Naive thymus-derived CD4-positive, alpha-beta T cell (primary cell): ENCODE measurements at regions of chr1 and their contacts with region 1.

Region 1: DNA sequence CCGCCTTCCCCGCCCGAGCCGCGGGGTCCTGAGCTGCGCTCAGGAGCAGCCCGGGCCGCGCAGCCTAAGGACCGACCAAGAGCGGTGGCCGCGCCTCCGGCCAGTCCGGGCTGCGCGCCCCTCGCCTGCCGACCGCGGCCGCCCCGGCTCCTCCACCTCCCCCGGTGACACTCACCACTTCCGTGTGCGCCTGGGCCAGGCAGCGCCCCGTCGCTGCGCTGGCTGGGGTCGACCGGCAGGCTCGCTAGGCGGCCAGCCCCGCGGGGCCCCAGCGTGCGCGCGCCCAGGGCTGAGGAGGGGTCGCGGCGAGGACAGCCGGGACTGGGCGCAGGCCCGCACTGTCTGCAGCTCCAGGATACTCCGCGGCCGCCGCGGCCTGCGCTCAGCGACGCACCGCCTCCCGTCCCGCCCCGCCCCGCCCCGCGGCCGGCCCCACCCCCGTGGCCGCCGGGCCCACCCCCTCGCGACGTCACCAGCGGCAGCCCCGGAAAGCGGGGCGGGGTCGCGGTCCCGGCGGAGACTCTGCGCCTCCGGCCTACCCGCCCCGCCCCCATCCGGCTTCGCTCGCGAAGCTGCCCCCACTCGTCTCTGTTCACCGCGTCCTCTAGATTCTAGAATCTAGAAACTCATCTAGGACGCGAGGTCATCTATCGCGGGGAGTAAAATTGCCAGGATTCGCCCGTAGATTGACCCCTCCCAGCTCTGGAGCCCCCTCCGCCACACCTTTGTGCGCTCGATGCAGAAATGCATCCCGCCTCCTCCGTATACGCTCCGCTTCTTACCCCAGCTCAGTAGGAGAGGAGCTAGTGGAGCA is at the start of gene JAK1:
- DNase-seq: peak; percentile 79 to 94 (median 91)
- ATAC-seq: peak; percentile 91
- H3K4me3 ChIP-seq: peak within 1 kb of the TSS; percentile 93
- H3K4me3 Mint-ChIP-seq: peak within 1 kb of the TSS; percentile 90 to 97 (median 94)
- H3K27ac ChIP-seq: peak within 1 kb of the TSS; percentile 97
- H3K27ac Mint-ChIP-seq: peak within 1 kb of the TSS; percentile 91 to 99 (median 97)
- H3K4me1 ChIP-seq: peaks cover 31 to 41% of the 10 kb centered on the region in 2 donors
- H3K4me1 Mint-ChIP-seq: peaks cover 37 to 55% (median 49%) of the 10 kb centered on the region in 7 donors
- H3K27me3 ChIP-seq: no peaks in the 10 kb centered on the region
- H3K27me3 Mint-ChIP-seq: peaks cover 0 to 3% (median 0%) of the 10 kb centered on the region in 5 donors
- total RNA-seq, gene JAK1: 210 to 365 (median 265) TPM

Region 2: DNA sequence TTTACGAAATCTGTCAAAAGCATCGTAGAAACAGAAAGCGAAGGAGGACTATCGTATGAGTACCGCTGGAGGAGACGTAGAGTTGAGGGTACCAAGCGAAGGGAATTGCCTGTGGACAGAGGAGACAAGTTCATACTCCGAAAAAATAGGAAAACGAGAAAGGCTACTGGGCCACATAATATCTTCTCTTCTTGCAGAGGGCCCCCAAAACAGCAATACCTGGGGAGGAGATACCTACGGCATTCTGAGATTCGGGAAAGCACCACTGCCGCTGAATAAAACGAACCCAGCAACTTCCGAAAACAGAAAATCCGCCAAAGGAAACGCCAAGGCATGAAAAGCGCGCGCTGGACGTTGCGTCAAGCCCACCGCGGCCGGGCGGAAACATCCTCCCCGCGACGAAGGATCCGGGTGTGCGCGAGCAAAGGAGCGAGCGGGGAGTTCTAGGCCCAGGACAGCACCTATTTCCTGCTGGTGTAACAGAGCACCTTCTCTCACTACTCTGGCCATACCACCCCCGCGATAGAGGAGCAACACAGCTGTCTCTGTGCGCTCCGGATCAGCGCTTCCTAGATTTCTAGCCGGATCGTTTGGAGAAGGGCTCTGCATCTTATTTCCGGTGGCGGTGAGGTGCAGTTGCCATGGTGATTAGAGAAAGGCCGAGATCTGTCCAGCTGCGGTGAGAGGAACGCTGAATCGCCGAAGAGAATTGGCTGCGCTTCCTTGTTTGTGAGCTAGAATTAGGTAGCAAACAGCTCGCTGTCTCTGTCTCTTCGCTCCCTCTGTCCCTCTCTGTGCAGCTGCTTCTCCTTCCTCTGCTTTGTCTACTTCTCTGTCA is 1443.3 kb before region 1 on chr1 and contains the starts of genes EFCAB7 and ITGB3BP:
- CTCF ChIA-PET with region 1: no interaction called
- POLR2A ChIA-PET with region 1: no interaction called
- intact Hi-C with region 1: loop called in 1 of 2 experiments (anchors 10 kb)
- DNase-seq: peak; percentile 73 to 86 (median 82)
- ATAC-seq: peak; percentile 92
- H3K4me3 ChIP-seq: peak within 1 kb of the TSS; percentile 83
- H3K4me3 Mint-ChIP-seq: peak within 1 kb of the TSS; percentile 82 to 100 (median 98)
- H3K27ac ChIP-seq: peak within 1 kb of the TSS; percentile 78
- H3K27ac Mint-ChIP-seq: peak within 1 kb of the TSS; percentile 93 to 99 (median 97)
- H3K4me1 ChIP-seq: peaks cover 7 to 13% of the 10 kb centered on the region in 2 donors
- H3K4me1 Mint-ChIP-seq: peaks cover 12 to 47% (median 36%) of the 10 kb centered on the region in 7 donors
- H3K27me3 ChIP-seq: no peaks in the 10 kb centered on the region
- H3K27me3 Mint-ChIP-seq: peaks cover 0 to 2% (median 0%) of the 10 kb centered on the region in 5 donors
- total RNA-seq, gene EFCAB7: 4.1 to 13.5 (median 9.2) TPM
- total RNA-seq, gene ITGB3BP: 16.5 to 52.6 (median 32.9) TPM

Region 3: GRCh38 chr1:64711266-64711665 is 255.1 kb before region 1 on chr1:
- CTCF ChIA-PET with region 1: no interaction called
- POLR2A ChIA-PET with region 1: no interaction called
- intact Hi-C with region 1: no loop called
- DNase-seq: no peak
- ATAC-seq: no peak
- H3K4me3 ChIP-seq: no peak overlapping the region
- H3K4me3 Mint-ChIP-seq: no peak overlapping the region
- H3K27ac ChIP-seq: no peak overlapping the region
- H3K27ac Mint-ChIP-seq: no peak overlapping the region
- H3K4me1 ChIP-seq: no peaks in the 10 kb centered on the region
- H3K4me1 Mint-ChIP-seq: peaks cover 0 to 2% (median 0%) of the 10 kb centered on the region in 7 donors
- H3K27me3 ChIP-seq: no peaks in the 10 kb centered on the region
- H3K27me3 Mint-ChIP-seq: peaks cover 0 to 16% (median 0%) of the 10 kb centered on the region in 5 donors

Region 4: DNA sequence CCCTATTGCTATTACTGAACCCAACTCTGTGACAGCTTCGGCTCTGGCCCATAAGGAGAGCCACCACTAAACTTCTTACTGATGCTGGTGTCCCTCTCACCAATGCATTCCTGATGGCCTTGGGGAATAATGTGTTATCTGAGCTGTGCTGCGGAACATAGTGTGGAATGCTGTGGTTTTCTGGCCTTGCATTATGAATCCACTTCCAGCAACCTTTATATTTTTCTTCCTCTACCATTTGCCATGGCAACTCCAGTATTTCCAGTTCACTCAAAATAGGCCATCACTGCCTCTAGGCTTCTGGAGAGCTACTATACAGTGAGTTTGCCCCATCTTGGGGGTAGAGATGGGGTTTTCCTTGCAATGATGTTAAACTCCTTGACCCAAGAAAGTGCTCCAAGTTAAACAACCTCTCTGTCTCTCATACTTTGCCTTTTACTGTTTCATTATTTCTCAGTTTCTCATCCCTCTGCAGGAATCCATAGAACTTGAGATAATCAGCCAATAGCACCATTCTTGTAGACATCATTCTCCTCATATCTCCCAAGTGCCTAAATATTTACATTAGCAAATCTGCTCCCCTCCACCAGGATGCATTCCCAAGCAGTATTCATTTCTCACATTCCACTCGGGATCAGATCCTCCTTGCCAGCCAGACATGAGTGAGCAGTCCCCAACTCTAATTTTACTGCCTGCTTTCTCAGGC is 232.6 kb before region 1 on chr1:
- CTCF ChIA-PET with region 1: no interaction called
- POLR2A ChIA-PET with region 1: no interaction called
- intact Hi-C with region 1: no loop called
- DNase-seq: no peak
- ATAC-seq: no peak
- H3K4me3 ChIP-seq: no peak overlapping the region
- H3K4me3 Mint-ChIP-seq: no peak overlapping the region
- H3K27ac ChIP-seq: no peak overlapping the region
- H3K27ac Mint-ChIP-seq: no peak overlapping the region
- H3K4me1 ChIP-seq: no peaks in the 10 kb centered on the region
- H3K4me1 Mint-ChIP-seq: no peaks in the 10 kb centered on the region
- H3K27me3 ChIP-seq: no peaks in the 10 kb centered on the region
- H3K27me3 Mint-ChIP-seq: peaks cover 0 to 15% (median 4%) of the 10 kb centered on the region in 5 donors

Region 5: GRCh38 chr1:64744492-64745180 is 221.7 kb before region 1 on chr1 and contains the start of gene RAVER2:
- CTCF ChIA-PET with region 1: no interaction called
- POLR2A ChIA-PET with region 1: no interaction called
- intact Hi-C with region 1: loop called (anchors 5 to 10 kb)
- DNase-seq: peak; percentile 41 to 60 (median 48)
- ATAC-seq: peak; percentile 84
- H3K4me3 ChIP-seq: peak within 1 kb of the TSS; percentile 55
- H3K4me3 Mint-ChIP-seq: peak within 1 kb of the TSS; percentile 80 to 98 (median 90)
- H3K27ac ChIP-seq: peak within 1 kb of the TSS; percentile 10
- H3K27ac Mint-ChIP-seq: peak within 1 kb of the TSS in 8 of 9 donors; percentile 28 to 93 (median 82)
- H3K4me1 ChIP-seq: peaks cover 5% of the 10 kb centered on the region in 2 donors
- H3K4me1 Mint-ChIP-seq: peaks cover 11 to 26% (median 16%) of the 10 kb centered on the region in 7 donors
- H3K27me3 ChIP-seq: no peaks in the 10 kb centered on the region
- H3K27me3 Mint-ChIP-seq: peaks cover 0 to 51% (median 6%) of the 10 kb centered on the region in 5 donors
- total RNA-seq, gene RAVER2: 0.29 to 1.9 (median 1.2) TPM

Region 6: DNA sequence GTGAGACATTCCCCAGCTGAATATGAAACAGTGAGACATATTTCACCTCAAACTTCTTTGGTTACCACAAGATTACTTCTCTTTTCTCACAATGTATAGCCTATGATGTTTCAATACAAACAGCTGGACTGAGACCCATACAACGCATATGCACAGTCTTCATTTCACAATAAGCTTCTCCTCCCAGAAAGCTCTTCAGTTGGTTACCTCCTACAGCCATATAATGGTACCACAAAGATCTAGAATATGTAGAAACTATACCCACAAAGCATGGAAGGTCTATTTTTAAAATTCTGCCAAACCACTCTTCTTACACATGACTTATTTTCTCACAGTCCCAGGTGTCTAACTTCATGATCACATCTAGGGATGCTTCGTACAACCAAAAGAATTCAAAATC is 70.9 kb before region 1 on chr1:
- CTCF ChIA-PET with region 1: no interaction called
- POLR2A ChIA-PET with region 1: interaction called, 8 read pairs
- intact Hi-C with region 1: loop called in 1 of 2 experiments (anchors 5 kb)
- DNase-seq: no peak
- ATAC-seq: peak; percentile 54
- H3K4me3 ChIP-seq: no peak overlapping the region
- H3K4me3 Mint-ChIP-seq: peak overlapping the region in 8 of 10 donors; percentile 7 to 62 (median 36)
- H3K27ac ChIP-seq: no peak overlapping the region
- H3K27ac Mint-ChIP-seq: peak overlapping the region in 5 of 9 donors; percentile 1 to 48 (median 43)
- H3K4me1 ChIP-seq: peaks cover 70 to 79% of the 10 kb centered on the region in 2 donors
- H3K4me1 Mint-ChIP-seq: peaks cover 68 to 100% (median 97%) of the 10 kb centered on the region in 7 donors
- H3K27me3 ChIP-seq: no peaks in the 10 kb centered on the region
- H3K27me3 Mint-ChIP-seq: no peaks in the 10 kb centered on the region

Region 7: GRCh38 chr1:64948905-64949833 is 17.2 kb before region 1 on chr1:
- CTCF ChIA-PET with region 1: no interaction called
- POLR2A ChIA-PET with region 1: interaction called, 9 read pairs
- intact Hi-C with region 1: loop called (anchors 2 kb)
- DNase-seq: peak in 1 of 9 donors; percentile 42
- ATAC-seq: peak; percentile 72
- H3K4me3 ChIP-seq: no peak overlapping the region
- H3K4me3 Mint-ChIP-seq: peak overlapping the region; percentile 2 to 69 (median 26)
- H3K27ac ChIP-seq: no peak overlapping the region
- H3K27ac Mint-ChIP-seq: peak overlapping the region in 7 of 9 donors; percentile 2 to 81 (median 19)
- H3K4me1 ChIP-seq: peaks cover 56 to 58% of the 10 kb centered on the region in 2 donors
- H3K4me1 Mint-ChIP-seq: peaks cover 62 to 86% (median 72%) of the 10 kb centered on the region in 7 donors
- H3K27me3 ChIP-seq: no peaks in the 10 kb centered on the region
- H3K27me3 Mint-ChIP-seq: no peaks in the 10 kb centered on the region

Region 8: GRCh38 chr1:65148548-65149350 is 182.4 kb after region 1 on chr1:
- CTCF ChIA-PET with region 1: no interaction called
- POLR2A ChIA-PET with region 1: no interaction called
- intact Hi-C with region 1: loop called in 1 of 2 experiments (anchors 1 kb)
- DNase-seq: peak in 6 of 9 donors; percentile 8 to 82 (median 18)
- ATAC-seq: peak; percentile 51
- H3K4me3 ChIP-seq: peak overlapping the region; percentile 45
- H3K4me3 Mint-ChIP-seq: peak overlapping the region; percentile 81 to 95 (median 86)
- H3K27ac ChIP-seq: no peak overlapping the region
- H3K27ac Mint-ChIP-seq: peak overlapping the region in 1 of 9 donors; percentile 81
- H3K4me1 ChIP-seq: peaks cover 0 to 6% of the 10 kb centered on the region in 2 donors
- H3K4me1 Mint-ChIP-seq: peaks cover 7 to 52% (median 14%) of the 10 kb centered on the region in 7 donors
- H3K27me3 ChIP-seq: peaks cover 0 to 6% of the 10 kb centered on the region in 2 donors
- H3K27me3 Mint-ChIP-seq: peaks cover 12 to 60% (median 53%) of the 10 kb centered on the region in 5 donors